Left cardiac atrium (tissue), 4 donors: ENCODE measurements at regions of chr11 and their contacts with region 1.

Region 1: DNA sequence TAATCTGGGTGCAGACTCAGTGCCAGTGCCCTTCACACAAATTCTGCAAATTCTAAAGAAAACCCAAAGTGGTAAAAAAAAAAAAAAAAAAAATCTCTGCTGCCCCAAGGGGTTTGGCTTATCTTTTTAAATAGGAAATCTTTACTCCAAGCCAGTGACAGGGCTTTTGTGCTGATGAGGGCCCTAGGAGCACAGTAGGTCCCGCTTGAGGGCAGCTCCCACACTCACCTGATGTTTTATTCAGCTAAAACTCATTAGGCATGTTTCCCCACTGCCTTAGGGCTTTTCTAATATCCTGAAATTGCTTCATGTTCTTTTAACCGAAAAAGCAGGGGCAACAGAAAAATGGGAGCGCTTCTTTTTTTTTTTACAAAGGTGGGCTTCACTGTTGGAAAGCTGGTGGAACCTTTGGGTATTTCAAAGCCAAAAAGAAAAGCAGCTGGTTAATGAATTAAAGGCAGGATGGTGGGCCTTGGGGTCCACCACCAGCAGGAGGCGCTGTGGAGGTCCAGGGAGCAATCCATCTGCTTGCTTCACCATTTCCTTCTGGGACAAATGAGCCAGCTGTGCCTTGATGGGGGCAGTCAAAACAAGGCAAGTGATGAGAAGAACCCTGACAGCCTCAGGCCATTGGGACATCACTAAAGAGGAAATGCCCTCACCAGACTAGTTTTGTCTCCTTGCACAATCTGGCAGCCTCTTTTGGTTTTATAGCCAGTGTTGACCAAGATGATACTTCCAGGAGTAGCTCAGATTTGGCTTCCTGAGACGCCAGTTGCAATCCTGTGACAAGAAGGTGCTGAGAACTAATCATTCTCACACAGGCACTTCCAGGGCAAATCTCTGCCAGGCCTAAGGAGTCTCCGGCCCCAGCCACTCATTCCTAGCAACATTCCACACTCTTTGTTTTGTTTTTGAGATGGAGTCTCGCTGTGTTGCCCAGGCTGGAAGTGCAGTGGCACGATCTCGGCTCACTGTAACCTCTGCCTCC is 38.4 kb upstream of the WEE1 start:
- DNase-seq: peak; percentile 86
- ATAC-seq: peak; percentile 75 to 79

Region 2: DNA sequence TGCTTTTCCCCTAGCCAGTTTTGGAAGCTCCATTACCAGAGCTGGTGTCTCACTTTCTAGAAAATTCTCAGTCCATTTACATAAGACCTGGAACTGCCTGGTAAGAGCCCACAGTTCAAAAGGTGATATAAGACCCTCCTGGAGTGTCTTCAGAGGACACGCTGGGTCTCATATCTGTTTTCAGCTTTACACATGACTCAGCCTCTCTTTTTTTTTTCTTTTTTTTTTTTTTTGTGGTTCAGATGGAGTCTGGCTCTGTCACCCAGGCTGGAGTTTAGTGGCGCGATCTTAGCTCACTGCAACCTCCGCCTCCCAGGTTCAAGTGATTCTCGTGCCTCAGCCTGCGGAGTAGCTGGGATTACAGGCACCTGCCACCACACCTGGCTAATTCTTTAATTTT is 69.0 kb after region 1 on chr11:
- intact Hi-C with region 1: no loop called
- DNase-seq: no peak
- ATAC-seq: no peak

Region 3: DNA sequence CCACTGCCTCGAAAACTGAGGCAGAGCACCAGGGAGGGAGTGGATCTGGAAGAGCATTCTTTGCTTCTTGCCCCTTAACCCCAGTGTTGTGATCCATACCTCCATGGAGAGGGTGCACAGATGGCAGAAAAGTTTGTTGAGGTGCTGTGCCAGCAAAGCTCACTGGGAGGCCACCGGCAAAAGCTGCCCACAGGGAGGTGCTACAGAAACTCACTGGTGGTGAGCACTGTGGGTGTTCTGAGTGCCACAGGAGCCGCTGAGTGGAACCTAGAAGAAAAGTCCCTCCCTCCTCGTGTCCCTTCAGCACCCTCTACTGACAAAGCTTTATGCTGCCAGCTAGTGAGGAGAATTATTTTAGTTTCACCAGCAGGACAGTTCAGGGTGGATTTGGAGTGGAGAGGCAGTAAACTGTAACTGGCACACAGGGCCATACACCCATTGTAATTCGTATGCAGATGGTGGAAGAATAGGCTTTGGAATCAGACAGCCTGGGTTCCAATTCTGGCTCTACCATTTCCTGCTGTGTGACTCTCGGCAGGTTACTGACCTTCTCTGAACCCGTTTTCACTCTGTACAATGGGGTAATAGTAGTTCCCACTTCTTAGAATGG is 213.4 kb after region 1 on chr11:
- intact Hi-C with region 1: loop called in 1 of 2 experiments (anchors 10 kb)
- DNase-seq: peak; percentile 57
- ATAC-seq: peak; percentile 81 to 92